Aorta (tissue), 5 donors: ENCODE measurements at regions of chr6 and their contacts with region 1.

Region 1: GRCh38 chr6:107964671-107965340 is 6.8 kb upstream of the SEC63 start:
- DNase-seq: no peak
- ATAC-seq: no peak
- H3K4me3 ChIP-seq: no peak overlapping the region
- H3K27ac ChIP-seq: no peak overlapping the region
- H3K4me1 ChIP-seq: no peaks in the 10 kb centered on the region
- H3K27me3 ChIP-seq: no peaks in the 10 kb centered on the region

Region 2: GRCh38 chr6:108068618-108069017 is 103.8 kb after region 1 on chr6:
- intact Hi-C with region 1: loop called in 1 of 2 experiments (anchors 10 kb)
- DNase-seq: no peak
- ATAC-seq: no peak
- H3K4me3 ChIP-seq: no peak overlapping the region
- H3K27ac ChIP-seq: no peak overlapping the region
- H3K4me1 ChIP-seq: no peaks in the 10 kb centered on the region
- H3K27me3 ChIP-seq: no peaks in the 10 kb centered on the region